ENCODE measurements at regions of chr11 and their contacts with region 1.

Region 1: DNA sequence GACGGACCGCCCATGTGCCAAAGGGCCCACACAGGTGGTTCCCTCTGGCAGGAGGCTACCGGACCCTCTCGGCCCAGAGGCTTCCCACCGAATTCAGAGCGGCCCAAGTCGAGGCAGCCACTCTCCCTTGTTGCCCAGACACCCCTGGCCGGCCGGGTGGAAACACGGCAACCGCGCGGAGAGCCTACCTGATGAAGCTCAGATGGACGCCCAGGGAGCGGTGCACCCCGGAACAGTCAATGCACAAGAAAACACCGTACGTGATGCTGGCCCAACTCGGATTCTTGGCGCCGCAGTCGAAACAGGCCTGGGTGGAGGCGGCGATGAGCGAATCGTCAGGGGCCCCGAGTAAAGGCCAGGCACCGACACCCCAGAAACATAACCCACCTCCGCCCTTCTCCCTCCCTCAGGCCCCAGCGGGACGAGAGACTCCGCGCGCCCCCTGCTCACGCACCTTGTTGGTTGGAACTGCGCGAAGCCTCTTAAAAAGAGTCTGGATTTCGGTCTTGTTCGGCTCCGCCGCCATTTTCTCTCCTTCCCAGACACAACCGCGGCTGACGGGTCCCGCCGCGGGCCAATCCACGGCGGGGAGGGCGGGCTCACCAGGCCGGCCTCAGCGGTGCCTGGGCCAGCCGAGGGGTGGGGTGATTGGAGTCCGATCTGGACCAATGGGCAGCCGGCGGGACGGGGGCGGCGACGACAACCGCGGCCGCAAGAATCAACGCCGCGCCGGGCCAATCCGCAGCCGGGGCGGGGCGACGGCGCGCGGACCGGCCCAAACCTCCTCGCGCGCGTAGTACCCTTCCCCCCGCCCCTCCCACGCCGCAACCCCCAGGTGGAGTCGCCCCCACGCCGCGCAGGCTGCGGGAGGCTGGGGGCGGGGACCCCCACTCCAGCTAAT is at the start of gene ARFGAP2:
- DNase-seq: peak; percentile 96 to 97
- ATAC-seq: peak; percentile 75 to 78
- H3K4me3 ChIP-seq: peak within 1 kb of the TSS; percentile 83 to 93 (median 89)
- H3K27ac ChIP-seq: peak within 1 kb of the TSS; percentile 97 to 99 (median 98)
- H3K4me1 ChIP-seq: peaks cover 69 to 71% of the 10 kb centered on the region in 2 donors
- H3K27me3 ChIP-seq: no peaks in the 10 kb centered on the region
- CTCF ChIP-seq: no peak
- POLR2A ChIP-seq: peak; percentile 43 to 62
- total RNA-seq, gene ARFGAP2: 120 to 165 (median 142) TPM

Region 2: DNA sequence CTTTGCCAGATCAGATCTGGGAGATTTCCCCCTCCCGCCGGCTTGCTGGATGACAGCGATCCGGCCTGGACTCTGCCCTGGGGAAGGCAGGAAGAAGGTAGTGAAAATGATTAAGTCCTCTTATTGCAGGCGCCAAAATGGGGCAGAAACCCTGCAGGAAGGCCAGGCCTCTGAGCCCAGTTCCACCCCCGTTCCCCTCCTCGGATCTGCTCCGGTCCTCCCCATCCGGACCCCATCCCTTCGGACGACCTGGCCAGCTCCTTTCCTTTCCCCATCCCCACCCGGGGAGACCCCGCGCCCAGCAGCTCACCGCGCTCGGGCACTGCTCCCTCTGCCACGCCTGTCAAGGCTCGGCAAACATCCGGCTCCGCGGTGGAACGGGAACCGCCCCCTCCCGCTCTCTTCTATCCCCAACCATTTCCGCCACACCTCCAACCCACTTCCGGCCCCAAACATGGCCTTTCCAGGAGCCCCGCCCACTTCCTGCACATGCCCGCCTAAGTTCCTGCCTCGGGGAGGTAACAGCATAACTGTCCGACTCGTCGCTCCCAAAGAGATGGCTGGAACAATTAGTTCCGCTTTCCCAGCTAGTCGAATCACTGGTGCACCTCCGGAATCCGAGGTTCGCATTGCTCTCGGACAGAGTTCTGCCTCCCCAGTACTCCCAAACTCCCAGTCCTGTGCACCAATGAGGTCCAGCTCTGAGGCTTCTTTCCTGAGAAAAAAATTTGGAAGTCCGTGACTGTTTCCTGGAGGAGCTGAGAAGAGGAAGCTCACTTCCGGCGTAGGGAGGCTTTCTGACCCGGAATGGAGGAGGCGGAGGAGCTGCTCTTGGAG is 476.1 kb before region 1 on chr11 and contains the starts of genes ARHGAP1 and ZNF408:
- in situ Hi-C with region 1: no loop called
- intact Hi-C with region 1: loop called (anchors 10 kb)
- DNase-seq: peak; percentile 99
- ATAC-seq: peak; percentile 88 to 92
- H3K4me3 ChIP-seq: peak within 1 kb of the TSS; percentile 70 to 99 (median 93)
- H3K27ac ChIP-seq: peak within 1 kb of the TSS; percentile 88 to 100 (median 94)
- H3K4me1 ChIP-seq: peaks cover 60 to 62% of the 10 kb centered on the region in 2 donors
- H3K27me3 ChIP-seq: no peaks in the 10 kb centered on the region
- CTCF ChIP-seq: no peak
- POLR2A ChIP-seq: peak; percentile 88 to 90
- total RNA-seq, gene ARHGAP1: 11.1 to 34.8 (median 24.6) TPM
- total RNA-seq, gene ZNF408: 17.7 to 25.2 (median 19.3) TPM

Region 3: GRCh38 chr11:47213985-47214564 is 37.5 kb after region 1 on chr11:
- in situ Hi-C with region 1: no loop called
- intact Hi-C with region 1: loop called (anchors 2 kb)
- DNase-seq: peak; percentile 92 to 94
- ATAC-seq: peak; percentile 95 to 96
- H3K4me3 ChIP-seq: peak overlapping the region; percentile 69 to 89 (median 70)
- H3K27ac ChIP-seq: peak overlapping the region; percentile 95 to 98 (median 97)
- H3K4me1 ChIP-seq: peaks cover 14 to 23% of the 10 kb centered on the region in 2 donors
- H3K27me3 ChIP-seq: no peaks in the 10 kb centered on the region
- CTCF ChIP-seq: no peak
- POLR2A ChIP-seq: peak; percentile 64 to 74

Region 4: GRCh38 chr11:47269002-47269828 is 92.6 kb after region 1 on chr11:
- in situ Hi-C with region 1: no loop called
- intact Hi-C with region 1: loop called (anchors 2 kb)
- DNase-seq: peak; percentile 88 to 93
- ATAC-seq: peak; percentile 77 to 81
- H3K4me3 ChIP-seq: peak overlapping the region; percentile 55 to 87 (median 86)
- H3K27ac ChIP-seq: peak overlapping the region; percentile 98 to 99 (median 98)
- H3K4me1 ChIP-seq: peaks cover 37 to 40% of the 10 kb centered on the region in 2 donors
- H3K27me3 ChIP-seq: no peaks in the 10 kb centered on the region
- CTCF ChIP-seq: no peak
- POLR2A ChIP-seq: no peak

Measured in gastrocnemius medialis (tissue), 4 donors.